ENCODE measurements at regions of chr1 and their contacts with region 1.

Region 1: GRCh38 chr1:212665241-212666115 is 34.2 kb downstream of the BATF3 start:
- DNase-seq: peak; percentile 85
- ATAC-seq: peak; percentile 99
- H3K4me3 Mint-ChIP-seq: peak overlapping the region; percentile 79
- H3K27ac Mint-ChIP-seq: peak overlapping the region; percentile 82
- H3K4me1 Mint-ChIP-seq: peaks cover 35% of the 10 kb centered on the region
- H3K27me3 Mint-ChIP-seq: peaks cover 15% of the 10 kb centered on the region

Region 2: GRCh38 chr1:212410231-212410820 is 255.2 kb before region 1 on chr1:
- CTCF ChIA-PET with region 1: no interaction called
- POLR2A ChIA-PET with region 1: no interaction called
- DNase-seq: no peak
- ATAC-seq: no peak
- H3K4me3 Mint-ChIP-seq: no peak overlapping the region
- H3K27ac Mint-ChIP-seq: no peak overlapping the region
- H3K4me1 Mint-ChIP-seq: peaks cover 28% of the 10 kb centered on the region
- H3K27me3 Mint-ChIP-seq: no peaks in the 10 kb centered on the region

Region 3: GRCh38 chr1:212638492-212639151 is 26.9 kb before region 1 on chr1:
- CTCF ChIA-PET with region 1: interaction called, 13 read pairs
- POLR2A ChIA-PET with region 1: no interaction called
- DNase-seq: no peak
- ATAC-seq: no peak
- H3K4me3 Mint-ChIP-seq: no peak overlapping the region
- H3K27ac Mint-ChIP-seq: no peak overlapping the region
- H3K4me1 Mint-ChIP-seq: peaks cover 46% of the 10 kb centered on the region
- H3K27me3 Mint-ChIP-seq: peaks cover 19% of the 10 kb centered on the region

Region 4: DNA sequence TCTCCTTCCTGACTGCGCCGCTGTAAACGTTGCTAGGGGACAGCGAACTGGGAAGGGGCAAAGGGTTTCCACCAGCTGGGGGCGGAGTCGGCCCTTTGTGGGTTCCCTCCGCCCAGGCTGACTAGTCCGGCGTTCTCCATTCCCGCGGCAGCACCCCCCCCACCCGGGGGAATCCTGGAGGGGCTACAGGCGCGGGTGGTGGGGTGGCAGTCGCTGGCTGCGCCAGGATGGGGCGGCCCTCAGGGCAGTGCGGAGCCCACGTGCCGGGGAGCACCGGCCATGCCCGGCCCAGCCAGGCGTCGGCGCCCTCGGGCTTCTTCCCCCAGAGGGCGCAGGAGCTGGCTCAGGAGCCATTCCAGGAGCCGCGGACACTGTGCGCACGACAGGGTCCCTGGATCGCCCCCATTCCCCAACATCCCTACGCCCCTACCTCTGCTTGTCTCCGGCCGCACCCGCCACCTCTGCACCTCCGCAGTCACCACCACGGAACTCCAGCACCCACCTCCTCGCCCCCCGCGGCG is 33.7 kb after region 1 on chr1:
- CTCF ChIA-PET with region 1: interaction called, 47 read pairs
- POLR2A ChIA-PET with region 1: no interaction called
- DNase-seq: peak; percentile 64
- ATAC-seq: peak; percentile 82
- H3K4me3 Mint-ChIP-seq: peak overlapping the region; percentile 87
- H3K27ac Mint-ChIP-seq: peak overlapping the region; percentile 80
- H3K4me1 Mint-ChIP-seq: peaks cover 52% of the 10 kb centered on the region
- H3K27me3 Mint-ChIP-seq: peaks cover 5% of the 10 kb centered on the region

Region 5: DNA sequence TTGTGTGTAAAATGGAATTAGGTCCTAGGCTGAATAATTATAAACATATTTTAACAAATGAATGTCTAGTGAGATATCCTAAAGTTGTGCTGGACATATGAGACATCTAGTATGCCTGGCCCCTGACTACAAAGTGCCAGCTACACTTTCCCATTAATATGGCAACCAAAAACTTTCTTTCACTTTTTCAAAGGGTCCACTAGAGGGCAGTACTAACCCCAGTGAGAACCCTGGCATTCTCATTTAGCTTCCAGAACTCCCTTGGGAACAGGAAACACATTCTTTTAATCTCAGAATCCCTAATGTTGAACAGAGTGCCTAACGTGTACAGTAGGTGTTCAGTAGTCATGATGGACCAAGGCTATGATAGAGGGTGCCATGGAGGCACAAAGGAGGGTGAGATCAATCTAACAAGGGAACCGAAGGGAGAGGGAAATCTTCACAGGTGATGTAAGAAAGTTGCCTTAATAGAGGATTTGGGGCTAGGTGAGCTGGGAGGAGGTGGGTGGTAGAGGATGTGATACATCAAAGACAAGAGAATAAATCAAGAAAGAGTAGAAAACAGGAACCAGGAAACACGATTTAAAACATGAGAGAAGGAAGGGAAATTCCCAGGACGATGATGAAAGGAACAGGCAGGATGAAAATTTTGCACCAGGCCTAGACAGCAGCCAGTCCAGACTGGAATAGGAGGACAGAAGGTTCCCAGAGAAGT is 84.5 kb after region 1 on chr1:
- CTCF ChIA-PET with region 1: interaction called, 25 read pairs
- POLR2A ChIA-PET with region 1: no interaction called
- DNase-seq: no peak
- ATAC-seq: peak; percentile 45
- H3K4me3 Mint-ChIP-seq: no peak overlapping the region
- H3K27ac Mint-ChIP-seq: no peak overlapping the region
- H3K4me1 Mint-ChIP-seq: peaks cover 41% of the 10 kb centered on the region
- H3K27me3 Mint-ChIP-seq: no peaks in the 10 kb centered on the region

Region 6: DNA sequence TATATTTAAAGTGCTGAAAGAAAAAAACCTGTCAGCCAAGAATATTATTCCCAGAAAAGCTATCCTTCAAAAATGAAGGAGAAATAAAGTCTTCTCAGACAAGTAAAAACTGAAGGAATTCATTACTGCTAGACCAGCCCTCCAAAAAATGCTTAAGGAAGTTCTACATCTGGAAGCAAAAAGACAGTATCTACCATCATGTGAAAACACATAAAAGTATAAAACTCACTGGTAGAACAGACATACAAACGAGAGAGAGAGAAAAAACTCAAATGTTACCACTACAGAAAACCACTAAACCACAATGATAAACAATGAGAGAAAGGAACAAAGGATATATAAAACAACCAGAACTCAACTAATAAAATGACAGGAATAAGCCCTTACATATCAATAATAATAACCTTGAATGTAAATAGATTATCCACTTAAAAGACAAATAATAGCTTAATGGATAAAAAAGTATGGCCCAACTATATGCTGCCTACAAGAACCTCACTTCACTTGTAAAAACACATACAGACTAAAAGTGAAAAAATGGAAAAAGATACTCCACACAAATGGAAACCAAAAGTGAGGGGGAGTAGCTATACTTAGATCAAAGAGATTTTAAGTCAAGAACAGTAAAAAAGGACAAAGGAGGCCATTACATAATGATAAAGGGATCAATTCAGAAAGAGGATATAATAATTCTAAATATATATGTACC is 104.1 kb after region 1 on chr1:
- CTCF ChIA-PET with region 1: interaction called, 23 read pairs
- POLR2A ChIA-PET with region 1: no interaction called
- DNase-seq: no peak
- ATAC-seq: peak; percentile 63
- H3K4me3 Mint-ChIP-seq: no peak overlapping the region
- H3K27ac Mint-ChIP-seq: peak overlapping the region; percentile 26
- H3K4me1 Mint-ChIP-seq: peaks cover 27% of the 10 kb centered on the region
- H3K27me3 Mint-ChIP-seq: no peaks in the 10 kb centered on the region

Region 7: DNA sequence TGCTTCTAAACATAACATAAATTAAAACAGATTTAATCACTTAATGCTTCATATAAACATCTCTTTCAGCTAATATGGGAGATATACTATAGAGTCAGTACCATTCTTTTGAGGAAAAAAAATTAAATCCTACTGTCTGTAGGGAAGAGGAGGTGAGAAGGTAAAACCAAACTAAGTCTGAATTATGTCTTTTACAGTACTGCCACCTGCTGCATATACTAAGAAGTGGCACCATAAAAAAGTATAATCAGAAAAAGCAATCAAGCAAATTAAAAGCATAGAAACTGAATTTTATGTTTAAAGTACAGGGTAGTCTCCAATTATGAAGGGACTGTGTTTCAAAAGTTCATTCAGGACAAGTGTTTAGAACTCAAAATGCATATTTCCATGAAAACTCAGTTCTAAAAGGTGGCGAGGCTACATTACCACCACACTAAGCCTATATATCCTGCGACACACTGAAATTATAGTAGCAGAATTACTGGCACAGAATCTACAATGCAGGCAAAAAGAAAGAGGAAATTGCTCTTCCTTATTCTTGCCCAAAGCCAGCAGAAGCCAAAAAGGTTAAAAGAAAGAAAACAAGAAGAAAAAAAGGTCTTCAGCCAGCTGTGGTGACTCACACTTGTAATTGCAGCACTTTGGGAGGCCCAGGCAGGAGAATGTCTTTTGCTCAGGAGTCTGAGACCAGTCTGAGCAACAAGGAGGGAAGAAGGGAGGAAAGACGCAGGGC is 117.1 kb after region 1 on chr1:
- CTCF ChIA-PET with region 1: interaction called, 76 read pairs
- POLR2A ChIA-PET with region 1: no interaction called
- DNase-seq: no peak
- ATAC-seq: peak; percentile 57
- H3K4me3 Mint-ChIP-seq: no peak overlapping the region
- H3K27ac Mint-ChIP-seq: no peak overlapping the region
- H3K4me1 Mint-ChIP-seq: no peaks in the 10 kb centered on the region
- H3K27me3 Mint-ChIP-seq: no peaks in the 10 kb centered on the region

Region 8: DNA sequence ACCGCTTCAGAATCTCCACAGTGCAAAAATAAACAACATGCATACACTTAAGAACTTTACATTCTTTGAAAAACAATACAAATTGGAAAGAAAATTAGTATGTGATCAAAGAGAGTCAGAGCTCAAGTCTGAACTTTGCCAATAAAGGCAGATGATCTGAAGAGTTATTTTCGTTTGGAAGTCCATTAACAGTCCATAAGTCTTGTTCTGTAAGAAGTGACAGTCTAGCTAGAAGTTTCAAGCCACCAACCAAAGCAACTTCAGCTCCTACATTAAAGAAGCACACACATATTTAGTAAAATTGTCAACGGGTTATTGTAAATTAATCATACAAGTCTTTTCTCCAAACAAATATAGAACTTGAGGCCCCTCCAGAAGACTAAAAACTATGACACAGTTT is 329.4 kb after region 1 on chr1:
- CTCF ChIA-PET with region 1: interaction called, 26 read pairs
- POLR2A ChIA-PET with region 1: no interaction called
- DNase-seq: no peak
- ATAC-seq: no peak
- H3K4me3 Mint-ChIP-seq: no peak overlapping the region
- H3K27ac Mint-ChIP-seq: no peak overlapping the region
- H3K4me1 Mint-ChIP-seq: peaks cover 1% of the 10 kb centered on the region
- H3K27me3 Mint-ChIP-seq: no peaks in the 10 kb centered on the region